Calu3 (cell line): ENCODE measurements at regions of chr1 and their contacts with region 1.

Region 1: GRCh38 chr1:104648269-104648691 is 898.6 kb downstream of the AMY1C start:
- DNase-seq: no peak
- H3K4me3 Mint-ChIP-seq: no peak overlapping the region
- H3K27ac Mint-ChIP-seq: no peak overlapping the region
- H3K4me1 Mint-ChIP-seq: no peaks in the 10 kb centered on the region
- H3K27me3 Mint-ChIP-seq: no peaks in the 10 kb centered on the region
- CTCF ChIP-seq: no peak

Region 2: GRCh38 chr1:104531990-104532389 is 116.3 kb before region 1 on chr1:
- CTCF ChIA-PET with region 1: no interaction called
- intact Hi-C with region 1: no loop called
- DNase-seq: no peak
- H3K4me3 Mint-ChIP-seq: no peak overlapping the region
- H3K27ac Mint-ChIP-seq: no peak overlapping the region
- H3K4me1 Mint-ChIP-seq: no peaks in the 10 kb centered on the region
- H3K27me3 Mint-ChIP-seq: no peaks in the 10 kb centered on the region
- CTCF ChIP-seq: no peak

Region 3: GRCh38 chr1:104765085-104765484 is 116.8 kb after region 1 on chr1:
- CTCF ChIA-PET with region 1: interaction called, 5 read pairs
- intact Hi-C with region 1: loop called (anchors 10 kb)
- DNase-seq: no peak
- H3K4me3 Mint-ChIP-seq: no peak overlapping the region
- H3K27ac Mint-ChIP-seq: no peak overlapping the region
- H3K4me1 Mint-ChIP-seq: no peaks in the 10 kb centered on the region
- H3K27me3 Mint-ChIP-seq: no peaks in the 10 kb centered on the region
- CTCF ChIP-seq: no peak

Region 4: DNA sequence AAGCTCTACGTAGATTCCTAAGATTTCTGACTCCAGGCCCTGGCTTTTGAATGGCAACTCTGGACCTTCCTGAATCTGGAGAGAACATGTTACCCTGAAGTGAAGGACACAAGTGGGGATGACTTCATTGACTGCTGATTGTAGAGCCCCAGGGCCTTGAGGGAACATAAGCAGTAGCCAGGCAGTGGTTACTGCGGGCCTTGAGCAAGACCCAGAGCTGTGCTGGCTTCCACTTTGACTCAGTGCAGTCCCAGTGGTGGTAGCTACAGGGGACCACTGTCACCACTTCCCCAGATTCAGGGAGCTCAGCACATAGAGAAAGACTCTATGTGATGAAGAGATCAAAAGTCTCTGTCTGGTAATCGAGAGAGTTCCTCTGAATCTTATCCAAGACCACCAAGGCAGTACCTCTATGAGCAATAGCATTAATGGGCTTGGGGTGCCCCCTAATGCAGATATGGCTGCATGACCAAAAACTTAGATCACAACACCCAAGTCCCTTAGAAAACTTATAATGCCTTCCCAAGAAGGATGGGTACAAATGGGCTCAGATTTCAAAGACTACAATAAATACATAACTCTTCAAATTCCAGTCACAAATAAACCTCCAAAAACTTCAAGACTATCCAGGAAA is 379.7 kb after region 1 on chr1:
- CTCF ChIA-PET with region 1: no interaction called
- intact Hi-C with region 1: loop called (anchors 10 kb)
- DNase-seq: no peak
- H3K4me3 Mint-ChIP-seq: no peak overlapping the region
- H3K27ac Mint-ChIP-seq: no peak overlapping the region
- H3K4me1 Mint-ChIP-seq: no peaks in the 10 kb centered on the region
- H3K27me3 Mint-ChIP-seq: no peaks in the 10 kb centered on the region
- CTCF ChIP-seq: no peak

Region 5: GRCh38 chr1:105793536-105794146 is 1145.4 kb after region 1 on chr1:
- CTCF ChIA-PET with region 1: no interaction called
- intact Hi-C with region 1: loop called (anchors 10 kb)
- DNase-seq: peak; percentile 30
- H3K4me3 Mint-ChIP-seq: no peak overlapping the region
- H3K27ac Mint-ChIP-seq: no peak overlapping the region
- H3K4me1 Mint-ChIP-seq: no peaks in the 10 kb centered on the region
- H3K27me3 Mint-ChIP-seq: no peaks in the 10 kb centered on the region
- CTCF ChIP-seq: no peak